Spleen (tissue), 13 donors: ENCODE measurements at regions of chr7 and their contacts with region 1.

Region 1: DNA sequence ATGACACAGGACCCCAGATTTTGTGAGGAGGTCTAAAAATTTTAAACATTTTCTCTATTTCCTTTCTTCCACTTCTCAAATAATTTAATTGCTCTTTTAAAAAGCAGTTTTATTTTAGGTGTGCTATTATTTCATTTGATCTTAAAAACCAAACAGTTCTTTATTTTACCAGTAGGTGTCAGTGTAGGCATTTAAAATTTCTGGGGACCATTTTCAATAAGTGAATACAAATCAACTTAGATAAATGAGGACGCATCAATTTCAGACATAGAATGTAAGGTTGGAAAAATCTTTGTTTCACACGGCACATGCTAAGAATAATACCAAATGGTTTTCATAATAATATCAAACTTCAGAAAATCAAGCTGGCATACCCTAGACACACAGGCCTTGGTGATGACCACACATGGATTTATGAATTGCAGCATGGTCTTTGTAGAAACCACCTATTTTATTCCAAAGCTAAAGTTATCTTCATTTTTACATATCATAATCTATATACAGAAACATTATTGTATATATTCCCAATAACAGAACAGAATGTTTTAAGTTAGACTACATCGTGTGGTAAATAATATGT is 127.6 kb upstream of the SLC26A5 start:
- DNase-seq: no peak
- H3K4me3 ChIP-seq: no peak overlapping the region
- H3K27ac ChIP-seq: no peak overlapping the region
- H3K4me1 ChIP-seq: no peaks in the 10 kb centered on the region
- H3K27me3 ChIP-seq: peaks cover 0 to 18% (median 0%) of the 10 kb centered on the region in 7 donors
- CTCF ChIP-seq: peak in 8 of 11 experiments; percentile 25 to 68 (median 62)
- POLR2A ChIP-seq: no peak

Region 2: GRCh38 chr7:102891693-102892261 is 681.8 kb before region 1 on chr7:
- intact Hi-C with region 1: no loop called
- DNase-seq: no peak
- H3K4me3 ChIP-seq: no peak overlapping the region
- H3K27ac ChIP-seq: no peak overlapping the region
- H3K4me1 ChIP-seq: peaks cover 0 to 25% (median 8%) of the 10 kb centered on the region in 6 donors
- H3K27me3 ChIP-seq: no peaks in the 10 kb centered on the region
- CTCF ChIP-seq: no peak
- POLR2A ChIP-seq: no peak

Region 3: DNA sequence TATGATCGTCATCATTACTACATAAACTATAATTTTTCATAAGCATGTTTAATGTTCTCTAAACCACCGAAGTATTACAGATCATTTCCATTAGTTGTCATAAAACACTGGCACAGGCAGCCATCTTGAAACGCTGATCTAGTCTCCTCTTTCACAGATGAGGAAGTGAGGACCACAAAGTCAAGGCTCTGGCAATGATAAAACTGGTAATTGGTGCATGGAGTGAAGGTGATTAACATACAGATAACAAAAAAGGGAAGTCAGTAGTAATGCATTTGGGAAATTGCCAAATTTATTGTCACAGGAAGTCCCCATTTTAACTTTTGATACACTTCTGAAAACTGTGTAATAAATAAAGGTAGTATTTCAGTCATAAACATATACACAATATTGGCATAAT is 548.2 kb before region 1 on chr7:
- intact Hi-C with region 1: no loop called
- DNase-seq: no peak
- H3K4me3 ChIP-seq: no peak overlapping the region
- H3K27ac ChIP-seq: no peak overlapping the region
- H3K4me1 ChIP-seq: peaks cover 0 to 9% (median 2%) of the 10 kb centered on the region in 6 donors
- H3K27me3 ChIP-seq: no peaks in the 10 kb centered on the region
- CTCF ChIP-seq: no peak
- POLR2A ChIP-seq: no peak

Region 4: GRCh38 chr7:103347507-103348267 is 225.9 kb before region 1 on chr7 and contains the start of gene PSMC2:
- intact Hi-C with region 1: no loop called
- DNase-seq: peak; percentile 86
- H3K4me3 ChIP-seq: peak within 1 kb of the TSS; percentile 66 to 91 (median 78)
- H3K27ac ChIP-seq: peak within 1 kb of the TSS; percentile 53 to 94 (median 90)
- H3K4me1 ChIP-seq: peaks cover 37 to 93% (median 75%) of the 10 kb centered on the region in 6 donors
- H3K27me3 ChIP-seq: no peaks in the 10 kb centered on the region
- CTCF ChIP-seq: no peak
- POLR2A ChIP-seq: peak in 1 of 3 donors; percentile 18
- total RNA-seq, gene PSMC2: 62.6 to 102 (median 87.4) TPM

Region 5: DNA sequence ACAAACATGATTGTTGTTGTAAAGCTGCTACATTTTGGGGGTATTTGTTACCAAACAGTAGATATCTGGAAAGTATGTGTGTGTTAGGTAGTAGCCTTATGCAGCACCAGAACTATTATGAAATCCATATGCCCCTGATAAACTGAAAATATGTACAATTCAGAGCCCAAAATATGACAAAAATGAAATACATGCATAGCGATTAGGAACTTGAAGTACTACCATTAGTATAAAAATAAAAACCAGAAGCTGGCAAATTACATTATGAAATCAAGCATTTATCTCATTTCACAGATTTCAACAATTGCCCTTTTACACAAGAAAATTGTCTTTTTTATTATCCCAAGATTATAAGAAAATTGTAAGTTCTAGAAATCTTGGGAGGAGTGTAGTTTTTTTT is 161.4 kb before region 1 on chr7:
- intact Hi-C with region 1: no loop called
- DNase-seq: no peak
- H3K4me3 ChIP-seq: no peak overlapping the region
- H3K27ac ChIP-seq: no peak overlapping the region
- H3K4me1 ChIP-seq: no peaks in the 10 kb centered on the region
- H3K27me3 ChIP-seq: peaks cover 0 to 4% (median 0%) of the 10 kb centered on the region in 7 donors
- CTCF ChIP-seq: no peak
- POLR2A ChIP-seq: no peak

Region 6: DNA sequence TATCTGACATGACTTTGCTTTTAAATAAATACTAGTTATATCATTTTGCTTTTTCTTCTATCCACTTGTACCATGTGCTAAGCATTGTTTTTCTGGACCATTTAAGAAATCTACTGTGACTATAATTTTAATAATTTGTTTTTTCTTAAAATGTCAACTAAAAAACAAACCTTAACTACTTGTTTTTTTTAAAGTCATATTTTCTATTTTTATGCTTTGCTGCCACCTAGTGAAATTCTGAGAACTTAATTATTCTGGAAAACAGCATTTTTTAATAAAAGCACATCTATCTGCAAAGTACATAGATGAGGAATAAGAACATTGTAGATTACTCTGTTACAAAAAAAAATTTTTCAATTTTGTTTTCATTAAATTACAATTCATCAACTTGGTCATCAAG is 586.8 kb after region 1 on chr7:
- intact Hi-C with region 1: loop called (anchors 5 kb)
- DNase-seq: no peak
- H3K4me3 ChIP-seq: no peak overlapping the region
- H3K27ac ChIP-seq: no peak overlapping the region
- H3K4me1 ChIP-seq: no peaks in the 10 kb centered on the region
- H3K27me3 ChIP-seq: no peaks in the 10 kb centered on the region
- CTCF ChIP-seq: peak in 5 of 11 experiments; percentile 21 to 38 (median 23)
- POLR2A ChIP-seq: no peak

Region 7: GRCh38 chr7:104923010-104923421 is 1349.4 kb after region 1 on chr7:
- intact Hi-C with region 1: loop called (anchors 5 kb)
- DNase-seq: peak; percentile 85
- H3K4me3 ChIP-seq: no peak overlapping the region
- H3K27ac ChIP-seq: peak overlapping the region in 7 of 8 donors; percentile 56 to 80 (median 65)
- H3K4me1 ChIP-seq: peaks cover 0 to 24% (median 13%) of the 10 kb centered on the region in 6 donors
- H3K27me3 ChIP-seq: no peaks in the 10 kb centered on the region
- CTCF ChIP-seq: peak; percentile 38 to 80 (median 73)
- POLR2A ChIP-seq: no peak